A673 (cell line): ENCODE measurements at regions of chr14 and their contacts with region 1.

Region 1: DNA sequence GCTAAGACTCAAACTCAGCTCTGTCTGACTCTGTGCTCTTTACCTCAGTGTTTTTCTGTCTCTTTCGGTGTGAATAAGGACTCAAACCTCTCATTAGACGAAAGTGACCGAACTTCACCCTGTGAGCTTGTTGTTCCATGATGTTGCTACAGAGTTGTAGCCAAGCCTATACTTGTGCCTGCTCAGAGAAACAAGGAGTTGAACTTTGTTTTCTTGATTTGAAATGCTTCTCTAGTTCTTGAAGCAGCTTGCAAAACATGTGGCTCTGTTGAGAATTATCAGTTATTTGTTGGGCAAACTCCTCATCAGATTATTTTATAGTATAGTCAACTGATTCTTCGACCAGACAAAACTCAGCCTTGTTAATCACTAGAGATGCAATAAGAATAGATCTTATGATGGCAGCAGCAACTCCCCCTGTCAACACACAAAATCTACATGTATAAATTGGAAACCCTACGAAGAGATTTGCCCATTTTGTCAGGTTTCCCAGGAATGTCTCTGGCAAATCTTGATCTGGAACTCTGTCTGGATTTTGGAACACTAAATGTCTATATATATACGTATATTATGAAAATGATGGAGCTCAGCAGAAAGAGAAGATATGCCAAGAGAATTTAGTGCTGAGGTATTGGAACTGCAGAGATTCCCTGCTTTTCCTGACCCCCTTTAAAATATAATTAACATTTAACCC is 146.8 kb downstream of the TTLL5 start:
- DNase-seq: no peak
- H3K4me3 ChIP-seq: no peak overlapping the region
- H3K27ac ChIP-seq: no peak overlapping the region
- H3K4me1 ChIP-seq: no peaks in the 10 kb centered on the region
- H3K27me3 ChIP-seq: no peaks in the 10 kb centered on the region
- CTCF ChIP-seq: no peak

Region 2: GRCh38 chr14:75689012-75689411 is 118.8 kb before region 1 on chr14:
- CTCF ChIA-PET with region 1: no interaction called
- POLR2A ChIA-PET with region 1: no interaction called
- intact Hi-C with region 1: no loop called
- DNase-seq: no peak
- H3K4me3 ChIP-seq: no peak overlapping the region
- H3K27ac ChIP-seq: no peak overlapping the region
- H3K4me1 ChIP-seq: no peaks in the 10 kb centered on the region
- H3K27me3 ChIP-seq: no peaks in the 10 kb centered on the region
- CTCF ChIP-seq: no peak

Region 3: GRCh38 chr14:77782202-77782601 is 1974.4 kb after region 1 on chr14:
- CTCF ChIA-PET with region 1: no interaction called
- POLR2A ChIA-PET with region 1: interaction called, 13 read pairs
- intact Hi-C with region 1: no loop called
- DNase-seq: no peak
- H3K4me3 ChIP-seq: no peak overlapping the region
- H3K27ac ChIP-seq: no peak overlapping the region
- H3K4me1 ChIP-seq: no peaks in the 10 kb centered on the region
- H3K27me3 ChIP-seq: no peaks in the 10 kb centered on the region
- CTCF ChIP-seq: no peak